Activated CD4-positive, alpha-beta T cell treated with anti-CD3 and anti-CD28 coated beads for 36 hours (primary cell): ENCODE measurements at regions of chr17 and their contacts with region 1.

Region 1: DNA sequence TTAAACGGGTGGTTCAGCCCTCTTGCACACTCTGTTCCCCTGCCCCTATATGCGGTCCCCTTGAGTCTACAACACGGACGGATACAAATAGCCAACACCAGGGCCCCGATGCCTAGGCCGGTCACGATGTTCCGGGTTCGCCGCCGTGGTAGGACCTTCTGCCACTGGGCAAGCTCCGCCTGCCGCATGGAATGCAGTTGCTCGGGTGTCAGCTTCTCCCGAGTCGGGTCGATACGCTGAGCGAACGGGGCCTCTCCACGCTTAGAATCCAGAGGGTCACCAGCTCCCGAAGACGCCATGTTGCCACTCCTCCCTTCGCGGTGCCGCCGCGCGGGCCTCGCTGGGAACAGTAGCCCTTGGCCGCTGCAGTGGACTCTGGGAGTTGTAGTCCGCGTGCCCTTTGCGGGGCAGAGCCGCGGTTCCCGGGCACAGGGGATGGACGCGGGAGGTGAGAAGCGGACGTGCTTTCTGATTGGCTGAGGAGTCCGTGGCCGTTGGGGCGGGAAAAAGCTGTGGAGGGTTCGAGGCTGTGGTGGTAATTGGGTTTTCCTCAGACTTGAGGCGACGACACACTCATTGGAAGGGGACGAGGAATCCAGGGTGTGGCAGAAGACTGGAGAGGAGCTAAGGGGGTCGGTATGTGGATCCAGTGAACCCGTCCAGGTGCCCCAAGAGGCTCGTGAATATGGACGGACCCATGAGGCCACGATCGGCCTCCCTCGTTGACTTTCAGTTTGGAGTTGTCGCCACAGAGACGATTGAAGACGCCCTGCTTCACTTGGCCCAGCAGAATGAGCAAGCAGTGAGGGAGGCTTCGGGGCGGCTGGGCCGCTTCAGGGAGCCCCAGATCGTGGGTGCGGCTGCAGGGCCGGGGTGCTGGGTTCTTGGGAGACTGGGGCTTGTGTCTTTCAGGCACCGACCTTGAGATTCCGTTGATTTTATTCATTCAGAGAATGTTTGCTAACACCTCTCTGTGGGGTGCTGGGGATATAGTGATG is at the starts of genes CNTD1 and COA3:
- DNase-seq: peak; percentile 92
- ATAC-seq: peak; percentile 100
- H3K4me3 Mint-ChIP-seq: peak within 1 kb of the TSS; percentile 87
- H3K27ac Mint-ChIP-seq: peak within 1 kb of the TSS; percentile 58
- H3K4me1 Mint-ChIP-seq: peaks cover 16% of the 10 kb centered on the region
- H3K27me3 Mint-ChIP-seq: no peaks in the 10 kb centered on the region
- total RNA-seq, gene CNTD1: not detected
- total RNA-seq, gene COA3: 30.1 to 31.4 TPM

Region 2: DNA sequence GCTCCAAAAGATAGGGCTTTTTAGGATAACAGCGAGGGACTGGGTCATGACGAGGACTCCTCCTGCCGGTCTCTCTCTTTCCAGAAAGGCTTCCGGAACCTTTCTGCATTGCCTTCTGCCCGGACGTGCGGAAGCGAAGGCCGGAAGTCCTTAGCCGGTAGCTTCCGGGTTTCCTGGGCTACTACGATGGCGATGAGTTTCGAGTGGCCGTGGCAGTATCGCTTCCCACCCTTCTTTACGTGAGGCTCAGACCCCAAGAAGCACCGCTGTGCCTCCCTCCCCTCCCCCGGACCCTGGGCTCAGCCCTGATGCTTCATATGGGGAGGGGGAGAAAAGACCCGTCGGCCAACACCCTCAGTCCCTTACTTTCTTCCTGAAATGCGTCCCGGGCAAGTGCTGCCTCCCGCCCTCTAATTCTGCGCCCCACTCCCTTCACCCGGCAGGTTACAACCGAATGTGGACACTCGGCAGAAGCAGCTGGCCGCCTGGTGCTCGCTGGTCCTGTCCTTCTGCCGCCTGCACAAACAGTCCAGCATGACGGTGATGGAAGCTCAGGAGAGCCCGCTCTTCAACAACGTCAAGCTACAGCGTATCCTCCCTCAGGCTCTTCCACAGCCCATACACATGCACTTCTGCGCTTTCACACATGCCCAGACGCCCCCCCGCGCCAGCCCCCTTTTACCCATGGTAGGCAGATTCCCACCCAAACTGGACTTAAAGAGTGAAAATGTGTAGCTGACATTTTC is 25.2 kb before region 1 on chr17 and contains the start of gene VPS25:
- CTCF ChIA-PET with region 1: interaction called, 3 read pairs
- POLR2A ChIA-PET with region 1: no interaction called
- intact Hi-C with region 1: loop called in 1 of 2 experiments (anchors 1 kb)
- DNase-seq: peak; percentile 81
- ATAC-seq: peak; percentile 97
- H3K4me3 Mint-ChIP-seq: peak within 1 kb of the TSS; percentile 96
- H3K27ac Mint-ChIP-seq: peak within 1 kb of the TSS; percentile 95
- H3K4me1 Mint-ChIP-seq: peaks cover 22% of the 10 kb centered on the region
- H3K27me3 Mint-ChIP-seq: no peaks in the 10 kb centered on the region
- total RNA-seq, gene VPS25: 62.5 to 64.0 TPM

Region 3: DNA sequence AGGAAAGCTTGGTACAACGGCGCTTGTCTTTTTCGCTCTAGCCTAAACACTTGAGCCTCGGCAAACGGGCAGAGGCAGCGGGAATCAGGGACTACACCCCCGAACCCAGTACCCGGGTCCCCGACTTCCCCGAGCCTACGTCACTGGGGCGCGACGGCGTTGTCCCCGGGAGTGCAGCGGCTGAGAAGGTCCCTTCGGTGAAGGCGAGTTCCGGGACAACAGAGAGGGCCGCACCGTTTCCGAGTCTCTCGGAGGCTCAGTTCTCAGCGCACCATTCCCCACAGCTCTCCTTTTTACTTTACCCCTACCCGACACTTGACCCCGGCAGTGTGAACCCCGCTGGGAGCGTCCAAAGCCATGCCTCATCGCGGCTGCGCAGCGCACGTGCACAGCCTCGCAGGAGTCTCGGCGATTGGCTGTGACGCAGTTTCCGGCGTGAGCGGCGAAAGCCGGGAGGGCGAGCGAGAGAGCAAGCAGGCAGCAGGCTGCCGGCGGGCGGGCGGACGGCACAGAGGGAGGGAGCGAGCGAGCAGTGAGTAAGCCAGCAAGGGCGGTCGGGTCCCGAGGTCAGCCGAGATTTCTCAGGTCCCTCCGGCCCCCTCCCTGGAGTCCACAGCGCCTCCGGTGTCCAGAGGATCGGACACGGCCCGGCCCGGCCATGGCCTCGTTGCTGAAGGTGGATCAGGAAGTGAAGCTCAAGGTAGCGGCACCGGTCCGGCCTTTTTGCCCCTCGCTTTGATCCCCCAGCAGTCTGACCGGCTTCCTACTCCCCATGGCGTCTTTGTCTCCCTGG is 34.5 kb after region 1 on chr17 and contains the start of gene PSME3:
- CTCF ChIA-PET with region 1: no interaction called
- POLR2A ChIA-PET with region 1: no interaction called
- intact Hi-C with region 1: loop called in 1 of 2 experiments (anchors 1 kb)
- DNase-seq: peak; percentile 94
- ATAC-seq: peak; percentile 90
- H3K4me3 Mint-ChIP-seq: peak within 1 kb of the TSS; percentile 96
- H3K27ac Mint-ChIP-seq: peak within 1 kb of the TSS; percentile 98
- H3K4me1 Mint-ChIP-seq: peaks cover 18% of the 10 kb centered on the region
- H3K27me3 Mint-ChIP-seq: no peaks in the 10 kb centered on the region
- total RNA-seq, gene PSME3: 116 to 118 TPM